Breast epithelium (tissue), 4 donors: ENCODE measurements at regions of chr22 and their contacts with region 1.

Region 1: DNA sequence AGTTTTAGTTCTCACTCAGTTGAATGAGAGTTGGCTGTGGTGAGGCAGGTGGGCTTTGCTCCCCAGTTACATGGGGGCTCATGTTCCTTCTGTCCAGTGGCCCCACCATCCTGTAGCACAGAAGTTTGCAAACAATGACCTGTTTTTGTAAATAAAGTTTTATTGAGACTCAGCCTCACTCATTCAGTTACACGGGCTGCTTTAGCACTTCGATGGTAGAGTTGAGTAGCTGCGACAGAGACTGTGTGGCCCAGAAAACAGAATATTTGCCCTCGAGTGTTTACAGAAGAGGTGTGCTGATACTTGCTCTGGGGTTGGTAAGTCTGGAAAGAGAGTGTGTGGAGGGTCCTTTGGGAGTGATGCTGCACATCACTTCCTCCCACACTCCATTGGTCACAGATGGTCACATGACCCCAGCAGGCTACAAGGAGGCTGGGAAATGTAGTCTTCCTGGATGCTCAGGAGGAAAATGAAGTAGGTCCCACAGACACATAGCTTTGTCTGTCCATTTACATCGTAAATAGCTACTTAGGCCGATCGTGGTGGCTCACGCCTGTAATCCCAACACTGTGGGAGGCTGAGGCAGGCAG is 34.6 kb downstream of the IFT27 start:
- DNase-seq: peak in 1 of 2 donors; percentile 14
- H3K4me3 ChIP-seq: no peak overlapping the region
- H3K27ac ChIP-seq: no peak overlapping the region
- H3K4me1 ChIP-seq: no peaks in the 10 kb centered on the region
- H3K27me3 ChIP-seq: peaks cover 0 to 31% of the 10 kb centered on the region in 2 donors
- CTCF ChIP-seq: no peak
- POLR2A ChIP-seq: no peak

Region 2: GRCh38 chr22:35604621-35605368 is 1136.5 kb before region 1 on chr22:
- intact Hi-C with region 1: no loop called
- DNase-seq: no peak
- H3K4me3 ChIP-seq: no peak overlapping the region
- H3K27ac ChIP-seq: no peak overlapping the region
- H3K4me1 ChIP-seq: no peaks in the 10 kb centered on the region
- H3K27me3 ChIP-seq: no peaks in the 10 kb centered on the region
- CTCF ChIP-seq: no peak
- POLR2A ChIP-seq: no peak

Region 3: GRCh38 chr22:36166518-36167220 is 574.6 kb before region 1 on chr22:
- intact Hi-C with region 1: loop called (anchors 5 kb)
- DNase-seq: no peak
- H3K4me3 ChIP-seq: no peak overlapping the region
- H3K27ac ChIP-seq: no peak overlapping the region
- H3K4me1 ChIP-seq: no peaks in the 10 kb centered on the region
- H3K27me3 ChIP-seq: no peaks in the 10 kb centered on the region
- CTCF ChIP-seq: no peak
- POLR2A ChIP-seq: no peak